ENCODE measurements at regions of chr12 and their contacts with region 1.

Region 1: GRCh38 chr12:96766232-96766631 is 140.8 kb upstream of the NEDD1 start:
- DNase-seq: no peak
- ATAC-seq: no peak
- H3K4me3 ChIP-seq: no peak overlapping the region
- H3K27ac ChIP-seq: no peak overlapping the region
- H3K4me1 ChIP-seq: no peaks in the 10 kb centered on the region
- H3K27me3 ChIP-seq: no peaks in the 10 kb centered on the region
- CTCF ChIP-seq: no peak
- POLR2A ChIP-seq: no peak

Region 2: GRCh38 chr12:96861656-96862055 is 95.4 kb after region 1 on chr12:
- in situ Hi-C with region 1: loop called in 1 of 4 experiments (anchors 25 kb)
- intact Hi-C with region 1: no loop called
- DNase-seq: no peak
- ATAC-seq: no peak
- H3K4me3 ChIP-seq: no peak overlapping the region
- H3K27ac ChIP-seq: no peak overlapping the region
- H3K4me1 ChIP-seq: no peaks in the 10 kb centered on the region
- H3K27me3 ChIP-seq: no peaks in the 10 kb centered on the region
- CTCF ChIP-seq: no peak
- POLR2A ChIP-seq: no peak

Region 3: GRCh38 chr12:97493731-97494130 is 727.5 kb after region 1 on chr12:
- in situ Hi-C with region 1: no loop called
- intact Hi-C with region 1: no loop called
- DNase-seq: no peak
- ATAC-seq: no peak
- H3K4me3 ChIP-seq: no peak overlapping the region
- H3K27ac ChIP-seq: no peak overlapping the region
- H3K4me1 ChIP-seq: no peaks in the 10 kb centered on the region
- H3K27me3 ChIP-seq: no peaks in the 10 kb centered on the region
- CTCF ChIP-seq: no peak
- POLR2A ChIP-seq: no peak